Activated CD4-positive, alpha-beta T cell treated with anti-CD3 and anti-CD28 coated beads for 36 hours (primary cell): ENCODE measurements at regions of chr6 and their contacts with region 1.

Region 1: DNA sequence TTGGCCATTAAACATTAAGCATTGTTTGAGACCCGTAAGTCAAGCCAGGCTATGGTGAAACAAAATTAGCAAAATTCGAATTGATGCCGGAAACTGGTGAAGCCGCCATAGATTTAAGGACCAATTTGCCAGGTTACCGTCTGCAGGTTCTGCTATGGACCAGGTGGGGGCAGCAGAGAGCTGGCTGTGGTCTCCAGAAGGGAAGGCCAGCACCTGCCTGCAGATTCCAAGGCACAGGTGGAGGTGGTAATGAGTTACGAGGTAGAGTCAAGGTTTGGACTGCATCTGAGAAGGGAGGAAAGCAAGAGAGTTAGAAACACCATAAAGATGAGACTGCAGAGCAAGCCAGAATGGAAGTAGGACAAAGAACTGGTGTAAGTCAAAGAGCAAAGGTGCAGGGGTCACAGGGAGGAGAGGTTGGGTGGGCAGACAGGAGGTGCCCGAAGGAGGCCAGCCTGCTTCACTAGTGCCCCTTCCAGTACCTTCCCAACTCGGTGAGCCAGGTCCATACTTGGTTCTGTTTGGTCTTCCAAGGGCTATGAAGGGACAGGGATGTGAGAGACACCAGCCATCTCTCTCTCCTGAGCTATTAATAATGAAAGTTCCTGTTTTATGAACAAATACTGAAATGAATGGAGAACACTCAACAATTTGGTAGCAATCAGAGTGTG is 131.6 kb upstream of the ESR1 start:
- DNase-seq: peak; percentile 74
- ATAC-seq: peak; percentile 79
- H3K4me3 Mint-ChIP-seq: no peak overlapping the region
- H3K27ac Mint-ChIP-seq: no peak overlapping the region
- H3K4me1 Mint-ChIP-seq: peaks cover 16% of the 10 kb centered on the region
- H3K27me3 Mint-ChIP-seq: no peaks in the 10 kb centered on the region

Region 2: GRCh38 chr6:151723152-151723551 is 47.3 kb after region 1 on chr6:
- CTCF ChIA-PET with region 1: interaction called, 3 read pairs
- POLR2A ChIA-PET with region 1: no interaction called
- intact Hi-C with region 1: loop called in 1 of 2 experiments (anchors 1 kb)
- DNase-seq: peak; percentile 76
- ATAC-seq: peak; percentile 96
- H3K4me3 Mint-ChIP-seq: no peak overlapping the region
- H3K27ac Mint-ChIP-seq: peak overlapping the region; percentile 38
- H3K4me1 Mint-ChIP-seq: peaks cover 39% of the 10 kb centered on the region
- H3K27me3 Mint-ChIP-seq: peaks cover 12% of the 10 kb centered on the region

Region 3: GRCh38 chr6:151765444-151765886 is 89.6 kb after region 1 on chr6:
- CTCF ChIA-PET with region 1: interaction called, 13 read pairs
- POLR2A ChIA-PET with region 1: no interaction called
- intact Hi-C with region 1: no loop called
- DNase-seq: peak; percentile 57
- ATAC-seq: peak; percentile 50
- H3K4me3 Mint-ChIP-seq: no peak overlapping the region
- H3K27ac Mint-ChIP-seq: no peak overlapping the region
- H3K4me1 Mint-ChIP-seq: peaks cover 15% of the 10 kb centered on the region
- H3K27me3 Mint-ChIP-seq: peaks cover 9% of the 10 kb centered on the region

Region 4: GRCh38 chr6:152124429-152125074 is 448.7 kb after region 1 on chr6:
- CTCF ChIA-PET with region 1: interaction called, 8 read pairs
- POLR2A ChIA-PET with region 1: no interaction called
- intact Hi-C with region 1: loop called (anchors 1 to 5 kb)
- DNase-seq: no peak
- ATAC-seq: peak; percentile 49
- H3K4me3 Mint-ChIP-seq: no peak overlapping the region
- H3K27ac Mint-ChIP-seq: no peak overlapping the region
- H3K4me1 Mint-ChIP-seq: no peaks in the 10 kb centered on the region
- H3K27me3 Mint-ChIP-seq: no peaks in the 10 kb centered on the region

Region 5: DNA sequence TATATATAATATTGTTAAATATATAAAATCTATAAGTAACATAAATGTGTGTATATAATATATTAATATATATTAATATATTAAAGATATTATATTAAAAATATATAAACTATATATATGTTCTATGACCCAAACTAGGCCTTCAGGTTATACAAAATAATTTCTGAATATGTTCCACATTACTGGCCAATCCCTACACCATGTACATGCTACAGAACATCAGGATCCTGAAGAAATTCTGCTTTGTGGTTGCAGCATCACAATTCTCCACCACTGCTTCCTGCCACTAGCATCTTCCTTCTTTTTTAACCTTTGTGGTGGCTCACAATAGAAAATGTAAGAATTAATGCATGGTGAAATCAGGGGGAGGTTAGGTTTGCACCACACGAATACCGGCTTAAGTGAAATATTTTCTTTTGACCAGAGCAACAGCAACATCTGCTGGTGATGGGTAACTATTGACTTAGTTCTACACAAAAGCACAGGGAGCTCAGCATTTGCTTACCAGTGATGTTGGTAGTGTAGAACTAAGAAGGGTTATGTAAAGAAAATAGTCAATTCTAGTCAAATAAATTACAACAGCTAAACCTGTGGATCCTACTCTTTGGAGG is 680.7 kb after region 1 on chr6:
- CTCF ChIA-PET with region 1: no interaction called
- POLR2A ChIA-PET with region 1: no interaction called
- intact Hi-C with region 1: loop called in 1 of 2 experiments (anchors 5 kb)
- DNase-seq: no peak
- ATAC-seq: peak; percentile 69
- H3K4me3 Mint-ChIP-seq: no peak overlapping the region
- H3K27ac Mint-ChIP-seq: no peak overlapping the region
- H3K4me1 Mint-ChIP-seq: peaks cover 2% of the 10 kb centered on the region
- H3K27me3 Mint-ChIP-seq: no peaks in the 10 kb centered on the region